Endothelial cell of umbilical vein (primary cell): ENCODE measurements at regions of chr22 and their contacts with region 1.

Region 1: GRCh38 chr22:29787371-29787980 is 20.3 kb downstream of the UQCR10 start:
- DNase-seq: no peak
- H3K4me3 ChIP-seq: no peak overlapping the region
- H3K27ac ChIP-seq: no peak overlapping the region
- H3K4me1 ChIP-seq: no peaks in the 10 kb centered on the region
- H3K27me3 ChIP-seq: no peaks in the 10 kb centered on the region
- CTCF ChIP-seq: no peak
- POLR2A ChIP-seq: no peak

Region 2: DNA sequence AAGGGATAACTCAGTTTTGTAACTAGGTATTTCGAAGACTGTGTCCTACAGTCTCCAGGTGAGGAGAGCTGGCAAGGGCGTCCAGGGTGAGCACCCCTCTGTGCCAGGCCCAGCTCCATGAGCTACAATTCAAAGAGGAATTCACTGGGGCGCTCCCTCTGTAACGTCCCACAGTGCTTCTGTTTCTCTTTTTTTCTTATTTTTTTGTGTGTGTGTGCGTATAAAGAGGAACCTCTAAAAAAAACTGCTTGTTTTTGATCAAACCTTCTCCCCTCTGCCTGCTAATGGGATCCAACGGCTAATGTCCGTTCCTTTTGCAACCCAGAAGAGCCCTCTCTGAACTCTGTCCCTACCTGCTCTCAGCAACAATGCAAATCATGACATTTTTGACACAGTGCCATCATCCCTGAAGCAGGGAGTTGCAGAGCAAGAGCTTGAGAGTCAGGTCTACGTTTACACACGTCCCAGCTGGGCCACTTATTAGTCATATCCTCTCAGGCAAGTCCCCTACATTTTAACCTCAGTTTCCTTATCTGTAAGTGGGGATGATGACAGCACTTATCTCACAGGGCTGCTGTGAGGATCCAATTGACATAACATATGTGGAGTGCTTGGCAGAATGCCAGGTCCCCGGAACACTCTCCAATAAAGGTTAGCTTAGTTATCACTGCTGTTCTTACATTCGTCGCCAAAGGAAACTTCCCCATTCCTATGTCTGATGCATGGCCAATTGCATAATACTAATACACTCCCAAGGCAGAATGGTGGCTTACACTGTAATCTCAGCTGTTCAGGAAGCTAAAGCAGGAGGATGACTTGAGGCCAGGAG is 33.7 kb after region 1 on chr22:
- CTCF ChIA-PET with region 1: no interaction called
- POLR2A ChIA-PET with region 1: no interaction called
- dilution Hi-C with region 1: no loop called
- intact Hi-C with region 1: loop called (anchors 1 kb)
- DNase-seq: peak; percentile 84
- H3K4me3 ChIP-seq: no peak overlapping the region
- H3K27ac ChIP-seq: peak overlapping the region; percentile 51
- H3K4me1 ChIP-seq: peaks cover 20% of the 10 kb centered on the region
- H3K27me3 ChIP-seq: no peaks in the 10 kb centered on the region
- CTCF ChIP-seq: no peak
- POLR2A ChIP-seq: no peak

Region 3: DNA sequence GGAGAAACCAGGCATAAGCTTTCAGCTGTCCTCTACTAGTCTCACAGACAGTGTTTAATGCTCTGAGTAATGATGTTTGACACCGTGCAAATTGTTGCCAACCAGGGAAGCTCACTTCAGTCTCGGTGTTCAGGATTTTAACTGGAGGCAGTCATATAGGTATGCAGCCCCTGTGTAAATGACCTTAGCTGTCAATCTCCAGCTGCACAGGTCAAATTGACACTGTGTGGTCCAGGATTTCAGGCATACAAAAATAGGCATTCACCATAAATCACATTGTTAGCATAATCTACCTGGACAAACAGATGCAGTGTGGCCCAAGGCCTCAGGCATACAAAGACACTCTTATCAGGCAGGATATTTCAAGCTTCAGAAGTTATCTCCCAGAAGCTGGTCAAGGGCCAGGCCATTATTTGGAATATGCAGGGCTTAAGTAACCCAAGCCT is 267.1 kb after region 1 on chr22:
- CTCF ChIA-PET with region 1: no interaction called
- POLR2A ChIA-PET with region 1: no interaction called
- dilution Hi-C with region 1: no loop called
- intact Hi-C with region 1: no loop called
- DNase-seq: no peak
- H3K4me3 ChIP-seq: no peak overlapping the region
- H3K27ac ChIP-seq: no peak overlapping the region
- H3K4me1 ChIP-seq: no peaks in the 10 kb centered on the region
- H3K27me3 ChIP-seq: peaks cover 2 to 3% of the 10 kb centered on the region in 2 experiments
- CTCF ChIP-seq: no peak
- POLR2A ChIP-seq: no peak